Activated naive CD4-positive, alpha-beta T cell treated with anti-CD3 and anti-CD28 coated beads for 36 hours (primary cell): ENCODE measurements at regions of chr3 and their contacts with region 1.

Region 1: DNA sequence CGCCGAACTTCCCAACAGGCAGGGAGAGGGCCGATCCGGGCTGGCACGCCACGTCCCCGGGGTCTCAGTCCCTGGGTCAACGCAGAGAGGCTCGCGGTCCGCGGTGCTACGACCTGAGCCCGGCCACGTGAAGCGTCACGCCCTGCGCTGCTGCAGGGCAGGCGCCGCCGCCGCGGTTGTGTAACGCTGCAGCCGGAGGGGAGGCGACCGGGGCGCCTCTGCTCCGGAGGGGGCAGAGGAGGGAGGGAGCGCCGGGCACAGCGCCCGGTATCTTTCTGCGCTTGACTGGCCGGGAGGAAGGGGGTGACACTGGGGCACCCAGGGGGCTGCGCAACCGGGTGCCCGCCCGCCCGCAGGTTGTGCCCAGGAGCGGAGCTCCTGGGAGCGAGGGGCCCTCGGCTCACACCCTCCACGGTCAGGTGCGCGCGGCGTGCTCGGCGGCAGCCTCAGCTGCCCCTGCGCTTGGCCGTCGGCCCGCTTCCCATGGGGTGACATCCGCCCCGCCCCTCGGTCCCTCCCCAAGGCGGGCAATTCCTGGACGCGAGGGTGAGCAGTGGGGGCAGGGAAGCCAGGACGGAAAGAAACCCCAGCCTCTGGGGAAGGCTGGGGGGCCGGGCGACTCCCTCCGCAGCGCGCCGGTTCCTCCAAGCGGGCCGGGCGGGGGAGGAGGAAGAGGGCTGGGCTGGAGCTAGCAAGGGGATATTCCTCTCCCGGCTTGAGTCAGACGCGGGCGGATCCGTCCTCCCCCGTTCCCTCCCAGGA is 852 bp upstream of the BHLHE40 start:
- DNase-seq: peak; percentile 62
- H3K4me3 Mint-ChIP-seq: peak overlapping the region; percentile 96
- H3K27ac Mint-ChIP-seq: peak overlapping the region; percentile 98
- H3K4me1 Mint-ChIP-seq: peaks cover 53% of the 10 kb centered on the region
- H3K27me3 Mint-ChIP-seq: no peaks in the 10 kb centered on the region

Region 2: GRCh38 chr3:3126477-3127431 is 1851.6 kb before region 1 on chr3 and contains the start of gene TRNT1:
- CTCF ChIA-PET with region 1: no interaction called
- intact Hi-C with region 1: loop called (anchors 2 kb)
- DNase-seq: peak; percentile 96
- H3K4me3 Mint-ChIP-seq: peak within 1 kb of the TSS; percentile 97
- H3K27ac Mint-ChIP-seq: peak within 1 kb of the TSS; percentile 98
- H3K4me1 Mint-ChIP-seq: peaks cover 36% of the 10 kb centered on the region
- H3K27me3 Mint-ChIP-seq: no peaks in the 10 kb centered on the region
- total RNA-seq, gene TRNT1: 42.3 to 49.4 TPM

Region 3: DNA sequence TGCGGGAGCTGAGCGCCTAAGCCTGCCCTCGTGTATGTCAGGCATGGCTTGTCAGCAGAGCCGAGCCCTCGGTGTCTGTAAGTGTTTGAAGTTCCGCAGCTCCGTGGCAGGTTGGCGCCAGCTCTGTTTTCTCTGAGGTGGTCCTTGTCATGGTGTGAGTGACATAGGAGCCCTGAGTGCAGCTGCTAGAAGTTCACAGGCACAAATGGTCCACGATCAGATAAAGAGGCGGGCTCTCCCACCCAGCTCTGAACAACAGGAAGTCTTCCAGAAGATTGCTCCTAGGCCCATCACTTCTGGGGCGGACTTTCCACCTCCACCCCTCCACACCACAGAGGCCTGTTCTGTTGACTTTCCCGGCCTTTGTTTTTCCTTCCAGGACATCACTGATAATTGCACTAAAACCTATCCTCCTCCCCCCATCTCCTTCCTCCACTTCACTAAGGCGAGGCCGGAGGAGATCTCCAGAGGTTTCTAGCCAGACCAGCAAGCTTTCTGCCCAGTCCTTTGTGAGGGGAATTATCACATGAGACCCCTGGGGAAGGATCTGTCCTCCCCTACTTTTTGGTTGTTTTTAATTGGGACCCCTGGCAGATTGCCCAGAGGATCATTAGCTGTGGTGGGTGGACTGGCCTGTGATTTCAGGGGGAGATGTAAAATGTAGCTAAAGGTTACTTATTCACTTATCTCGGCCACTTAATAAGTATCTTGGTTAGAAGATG is 465.3 kb before region 1 on chr3:
- CTCF ChIA-PET with region 1: no interaction called
- intact Hi-C with region 1: loop called (anchors 5 kb)
- DNase-seq: no peak
- H3K4me3 Mint-ChIP-seq: no peak overlapping the region
- H3K27ac Mint-ChIP-seq: no peak overlapping the region
- H3K4me1 Mint-ChIP-seq: peaks cover 23% of the 10 kb centered on the region
- H3K27me3 Mint-ChIP-seq: no peaks in the 10 kb centered on the region

Region 4: GRCh38 chr3:4807381-4808280 is 170.8 kb before region 1 on chr3:
- CTCF ChIA-PET with region 1: interaction called, 15 read pairs
- intact Hi-C with region 1: loop called (anchors 1 kb)
- DNase-seq: no peak
- H3K4me3 Mint-ChIP-seq: no peak overlapping the region
- H3K27ac Mint-ChIP-seq: no peak overlapping the region
- H3K4me1 Mint-ChIP-seq: peaks cover 28% of the 10 kb centered on the region
- H3K27me3 Mint-ChIP-seq: no peaks in the 10 kb centered on the region

Region 5: GRCh38 chr3:4850928-4851265 is 127.5 kb before region 1 on chr3:
- CTCF ChIA-PET with region 1: interaction called, 27 read pairs
- intact Hi-C with region 1: loop called (anchors 1 kb)
- DNase-seq: peak; percentile 64
- H3K4me3 Mint-ChIP-seq: peak overlapping the region; percentile 38
- H3K27ac Mint-ChIP-seq: peak overlapping the region; percentile 94
- H3K4me1 Mint-ChIP-seq: peaks cover 84% of the 10 kb centered on the region
- H3K27me3 Mint-ChIP-seq: no peaks in the 10 kb centered on the region

Region 6: GRCh38 chr3:5006755-5007202 is 28.4 kb after region 1 on chr3:
- CTCF ChIA-PET with region 1: interaction called, 9 read pairs
- intact Hi-C with region 1: loop called (anchors 1 kb)
- DNase-seq: peak; percentile 95
- H3K4me3 Mint-ChIP-seq: peak overlapping the region; percentile 44
- H3K27ac Mint-ChIP-seq: peak overlapping the region; percentile 76
- H3K4me1 Mint-ChIP-seq: peaks cover 42% of the 10 kb centered on the region
- H3K27me3 Mint-ChIP-seq: peaks cover 7% of the 10 kb centered on the region

Region 7: GRCh38 chr3:5187156-5187919 is 209.0 kb after region 1 on chr3 and contains the start of gene EDEM1:
- CTCF ChIA-PET with region 1: interaction called, 3 read pairs
- intact Hi-C with region 1: loop called (anchors 1 kb)
- DNase-seq: peak; percentile 95
- H3K4me3 Mint-ChIP-seq: peak within 1 kb of the TSS; percentile 96
- H3K27ac Mint-ChIP-seq: peak within 1 kb of the TSS; percentile 99
- H3K4me1 Mint-ChIP-seq: peaks cover 27% of the 10 kb centered on the region
- H3K27me3 Mint-ChIP-seq: no peaks in the 10 kb centered on the region
- total RNA-seq, gene EDEM1: 137 to 138 TPM